ENCODE measurements at regions of chr14 and their contacts with region 1.

Region 1: GRCh38 chr14:49879683-49880204 is 13.1 kb upstream of the ARF6 start:
- DNase-seq: no peak
- H3K4me3 ChIP-seq: no peak overlapping the region
- H3K27ac ChIP-seq: no peak overlapping the region
- H3K4me1 ChIP-seq: no peaks in the 10 kb centered on the region
- H3K27me3 ChIP-seq: no peaks in the 10 kb centered on the region
- CTCF ChIP-seq: peak; percentile 49 to 58

Region 2: GRCh38 chr14:49892636-49893308 is 13.0 kb after region 1 on chr14 and contains the start of gene ARF6:
- intact Hi-C with region 1: no loop called
- DNase-seq: peak; percentile 98 to 99
- H3K4me3 ChIP-seq: peak within 1 kb of the TSS; percentile 84 to 93
- H3K27ac ChIP-seq: peak within 1 kb of the TSS; percentile 95 to 99
- H3K4me1 ChIP-seq: peaks cover 0 to 46% (median 24%) of the 10 kb centered on the region in 4 donors
- H3K27me3 ChIP-seq: no peaks in the 10 kb centered on the region
- CTCF ChIP-seq: peak; percentile 16 to 25

Region 3: GRCh38 chr14:50101417-50101816 is 221.7 kb after region 1 on chr14:
- intact Hi-C with region 1: loop called (anchors 5 kb)
- DNase-seq: no peak
- H3K4me3 ChIP-seq: no peak overlapping the region
- H3K27ac ChIP-seq: no peak overlapping the region
- H3K4me1 ChIP-seq: no peaks in the 10 kb centered on the region
- H3K27me3 ChIP-seq: no peaks in the 10 kb centered on the region
- CTCF ChIP-seq: no peak

Region 4: GRCh38 chr14:50351016-50351415 is 471.3 kb after region 1 on chr14:
- intact Hi-C with region 1: loop called (anchors 5 kb)
- DNase-seq: no peak
- H3K4me3 ChIP-seq: no peak overlapping the region
- H3K27ac ChIP-seq: no peak overlapping the region
- H3K4me1 ChIP-seq: peaks cover 0 to 8% (median 0%) of the 10 kb centered on the region in 4 donors
- H3K27me3 ChIP-seq: no peaks in the 10 kb centered on the region
- CTCF ChIP-seq: no peak